HCT116 (cell line): ENCODE measurements at regions of chr22 and their contacts with region 1.

Region 1: DNA sequence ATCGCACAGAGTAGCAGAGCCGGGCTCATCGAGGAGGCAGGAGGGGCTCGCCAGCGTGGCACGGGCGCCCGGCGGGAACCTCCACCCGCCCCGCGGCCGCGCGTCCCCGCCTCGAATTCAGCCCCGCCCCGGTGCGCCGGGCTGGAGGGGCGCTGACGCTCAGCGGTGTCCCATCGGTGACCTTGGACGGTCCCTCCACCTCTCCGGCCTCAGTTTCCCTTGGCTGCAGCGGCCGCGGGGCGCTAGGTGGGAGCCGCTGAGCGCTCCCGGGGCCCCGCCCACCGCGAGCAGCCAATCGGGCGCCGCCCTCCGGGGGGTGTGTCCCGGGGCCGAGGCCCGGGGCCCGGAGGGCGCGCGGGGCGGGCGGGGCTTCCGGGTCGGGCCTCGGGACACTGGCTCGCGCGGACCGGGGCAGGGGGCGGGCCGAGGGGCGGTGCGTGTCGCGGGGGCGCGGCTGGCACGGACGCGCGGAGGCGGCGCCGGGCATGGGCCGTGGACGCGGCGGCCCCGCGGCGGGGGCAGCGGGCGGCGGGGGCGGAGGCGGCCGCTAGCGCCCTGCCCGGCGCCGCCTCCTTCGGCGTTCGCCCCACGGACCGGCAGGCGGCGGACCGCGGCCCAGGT is at the start of gene PPARA:
- DNase-seq: peak; percentile 22
- ATAC-seq: peak; percentile 93
- H3K4me3 ChIP-seq: peak within 1 kb of the TSS; percentile 63 to 64
- H3K27ac ChIP-seq: peak within 1 kb of the TSS; percentile 52; the same call in 1 of the 2 replicates
- H3K4me1 ChIP-seq: peaks cover 7 to 20% of the 10 kb centered on the region in 2 experiments; a peak in 3 of 4 replicates
- H3K27me3 ChIP-seq: no peaks in the 10 kb centered on the region
- CTCF ChIP-seq: no peak
- POLR2A ChIP-seq: peak; percentile 0
- RAD21 ChIP-seq: no peak
- total RNA-seq, gene PPARA: 14.5 TPM

Region 2: GRCh38 chr22:46057762-46058420 is 92.3 kb before region 1 on chr22:
- CTCF ChIA-PET with region 1: no interaction called
- POLR2A ChIA-PET with region 1: no interaction called
- RAD21 ChIA-PET with region 1: no interaction called
- intact Hi-C with region 1: no loop called
- DNase-seq: no peak
- ATAC-seq: no peak
- H3K4me3 ChIP-seq: no peak overlapping the region
- H3K27ac ChIP-seq: no peak overlapping the region
- H3K4me1 ChIP-seq: peaks cover 9 to 18% of the 10 kb centered on the region in 2 experiments
- H3K27me3 ChIP-seq: no peaks in the 10 kb centered on the region
- CTCF ChIP-seq: no peak
- POLR2A ChIP-seq: no peak
- RAD21 ChIP-seq: no peak

Region 3: GRCh38 chr22:46245511-46245910 is 95.4 kb after region 1 on chr22:
- CTCF ChIA-PET with region 1: no interaction called
- POLR2A ChIA-PET with region 1: no interaction called
- RAD21 ChIA-PET with region 1: no interaction called
- intact Hi-C with region 1: loop called (anchors 10 kb)
- DNase-seq: no peak
- ATAC-seq: no peak
- H3K4me3 ChIP-seq: no peak overlapping the region
- H3K27ac ChIP-seq: no peak overlapping the region
- H3K4me1 ChIP-seq: peaks cover 0 to 9% of the 10 kb centered on the region in 2 experiments; a peak in 3 of 4 replicates
- H3K27me3 ChIP-seq: no peaks in the 10 kb centered on the region
- CTCF ChIP-seq: no peak
- POLR2A ChIP-seq: no peak
- RAD21 ChIP-seq: no peak